Activated CD4-positive, alpha-beta T cell treated with anti-CD3 and anti-CD28 coated beads for 36 hours (primary cell): ENCODE measurements at regions of chr6 and their contacts with region 1.

Region 1: GRCh38 chr6:14200047-14200446 is 82.5 kb downstream of the CD83 start:
- DNase-seq: no peak
- ATAC-seq: no peak
- H3K4me3 Mint-ChIP-seq: no peak overlapping the region
- H3K27ac Mint-ChIP-seq: no peak overlapping the region
- H3K4me1 Mint-ChIP-seq: no peaks in the 10 kb centered on the region
- H3K27me3 Mint-ChIP-seq: no peaks in the 10 kb centered on the region

Region 2: GRCh38 chr6:14187406-14187805 is 12.6 kb before region 1 on chr6:
- CTCF ChIA-PET with region 1: no interaction called
- POLR2A ChIA-PET with region 1: no interaction called
- intact Hi-C with region 1: no loop called
- DNase-seq: no peak
- ATAC-seq: no peak
- H3K4me3 Mint-ChIP-seq: no peak overlapping the region
- H3K27ac Mint-ChIP-seq: no peak overlapping the region
- H3K4me1 Mint-ChIP-seq: no peaks in the 10 kb centered on the region
- H3K27me3 Mint-ChIP-seq: no peaks in the 10 kb centered on the region

Region 3: DNA sequence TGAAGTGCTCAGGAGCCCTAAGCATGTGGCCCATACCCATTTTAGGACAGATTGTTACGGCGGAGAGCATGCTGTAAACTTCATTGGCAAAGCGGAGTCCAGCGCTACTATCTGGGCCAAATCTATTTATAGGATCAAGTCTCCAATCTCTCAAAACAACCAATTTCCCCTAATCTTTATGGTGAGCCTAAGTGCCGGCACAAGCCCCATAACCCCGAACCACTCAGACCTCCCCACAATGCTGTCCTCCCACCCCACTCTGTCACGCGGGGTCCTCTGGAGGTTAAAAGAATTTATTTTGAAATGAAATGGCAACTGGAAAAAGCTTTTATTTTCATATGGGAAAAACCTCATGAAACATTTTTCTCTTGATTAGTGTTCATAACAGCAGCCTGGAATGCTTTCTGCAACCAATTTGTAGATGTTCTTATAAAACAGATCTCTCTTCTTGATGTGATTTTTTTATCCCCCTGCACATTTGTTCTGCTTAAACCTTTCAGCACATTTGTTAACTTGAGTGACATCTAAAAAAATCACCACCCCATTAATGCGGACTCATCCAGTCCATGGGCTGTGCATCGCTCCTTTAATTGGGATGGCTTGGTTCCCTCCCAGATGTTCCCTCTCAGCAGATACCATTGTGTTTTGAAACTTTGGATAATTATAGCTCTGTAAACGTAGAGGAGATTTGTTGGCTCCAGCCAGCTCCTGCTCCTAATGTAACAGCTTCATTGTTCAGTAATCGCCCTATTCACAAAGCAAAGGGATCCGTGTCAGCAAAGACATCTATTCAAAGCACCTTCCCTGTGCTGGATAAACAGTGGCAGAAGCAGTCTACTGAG is 241.1 kb after region 1 on chr6:
- CTCF ChIA-PET with region 1: no interaction called
- POLR2A ChIA-PET with region 1: no interaction called
- intact Hi-C with region 1: no loop called
- DNase-seq: no peak
- ATAC-seq: no peak
- H3K4me3 Mint-ChIP-seq: no peak overlapping the region
- H3K27ac Mint-ChIP-seq: no peak overlapping the region
- H3K4me1 Mint-ChIP-seq: peaks cover 14% of the 10 kb centered on the region
- H3K27me3 Mint-ChIP-seq: no peaks in the 10 kb centered on the region

Region 4: DNA sequence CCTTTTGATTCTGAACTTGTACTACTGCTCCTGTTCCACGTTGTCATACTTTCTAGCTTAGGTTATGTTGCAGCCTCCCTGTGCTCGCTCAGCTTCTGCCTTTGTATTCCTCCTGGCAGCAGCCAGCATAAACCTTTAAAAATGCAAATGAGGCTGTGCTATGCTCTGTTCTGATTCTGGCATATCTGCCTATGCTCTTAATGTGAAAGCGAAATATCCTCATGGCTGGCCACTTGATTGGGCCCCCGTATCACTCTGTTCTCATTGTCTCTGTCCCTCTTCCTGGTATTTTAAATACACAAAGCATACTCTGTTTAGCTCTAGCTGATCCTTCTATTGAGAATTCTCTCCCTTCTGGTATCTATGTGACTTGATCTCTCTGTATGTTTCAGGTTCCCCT is 1184.9 kb after region 1 on chr6:
- CTCF ChIA-PET with region 1: no interaction called
- POLR2A ChIA-PET with region 1: interaction called, 10 read pairs
- intact Hi-C with region 1: no loop called
- DNase-seq: no peak
- ATAC-seq: no peak
- H3K4me3 Mint-ChIP-seq: no peak overlapping the region
- H3K27ac Mint-ChIP-seq: peak overlapping the region; percentile 67
- H3K4me1 Mint-ChIP-seq: peaks cover 82% of the 10 kb centered on the region
- H3K27me3 Mint-ChIP-seq: no peaks in the 10 kb centered on the region